HepG2 (cell line): ENCODE measurements at regions of chr4 and their contacts with region 1.

Region 1: DNA sequence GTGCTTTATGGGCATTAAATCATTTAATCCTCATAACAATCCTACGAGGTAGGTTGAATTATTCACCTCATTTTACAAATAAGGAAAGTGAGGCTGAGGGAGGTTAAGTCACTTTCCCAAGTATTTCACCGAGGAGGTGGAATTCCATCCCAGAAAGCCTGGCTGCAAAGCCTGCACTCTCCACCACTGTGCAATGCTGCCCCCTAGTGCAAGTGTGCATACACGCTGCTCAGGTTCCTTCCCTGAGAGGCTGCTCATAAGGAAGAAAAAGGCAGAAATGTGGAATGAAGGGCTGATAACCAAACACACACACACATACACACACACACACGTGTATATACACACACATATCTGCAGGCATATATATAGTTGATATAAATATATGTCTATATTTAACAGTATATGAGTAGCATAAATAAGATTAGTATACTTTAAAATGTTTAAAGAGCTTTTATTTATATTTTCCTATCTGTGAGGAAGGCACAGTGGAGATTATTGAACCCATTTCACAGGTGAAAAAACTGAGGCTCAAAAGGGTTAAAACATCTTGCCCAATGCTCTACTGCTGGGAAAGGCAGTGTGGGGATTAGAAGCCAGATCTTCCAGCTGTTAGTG is 714.5 kb upstream of the TENM3 start:
- DNase-seq: peak; percentile 56
- ATAC-seq: peak; percentile 97
- H3K4me3 ChIP-seq: no peak overlapping the region
- H3K27ac ChIP-seq: no peak overlapping the region
- H3K4me1 ChIP-seq: no peaks in the 10 kb centered on the region
- H3K27me3 ChIP-seq: 0 out of 5 replicates have a peak, but pooled peaks cover 1 to 2% of the 10 kb centered on the region in 2 experiments
- CTCF ChIP-seq: peak; percentile 92
- EP300 ChIP-seq: no peak
- POLR2A ChIP-seq: no peak
- RAD21 ChIP-seq: peak; percentile 83

Region 2: GRCh38 chr4:181105487-181105886 is 423.2 kb before region 1 on chr4:
- CTCF ChIA-PET with region 1: no interaction called
- POLR2A ChIA-PET with region 1: no interaction called
- in situ Hi-C with region 1: no loop called
- intact Hi-C with region 1: no loop called
- DNase-seq: no peak
- ATAC-seq: no peak
- H3K4me3 ChIP-seq: no peak overlapping the region
- H3K27ac ChIP-seq: no peak overlapping the region
- H3K4me1 ChIP-seq: no peaks in the 10 kb centered on the region
- H3K27me3 ChIP-seq: no peaks in the 10 kb centered on the region
- CTCF ChIP-seq: no peak
- EP300 ChIP-seq: no peak
- POLR2A ChIP-seq: no peak
- RAD21 ChIP-seq: no peak

Region 3: DNA sequence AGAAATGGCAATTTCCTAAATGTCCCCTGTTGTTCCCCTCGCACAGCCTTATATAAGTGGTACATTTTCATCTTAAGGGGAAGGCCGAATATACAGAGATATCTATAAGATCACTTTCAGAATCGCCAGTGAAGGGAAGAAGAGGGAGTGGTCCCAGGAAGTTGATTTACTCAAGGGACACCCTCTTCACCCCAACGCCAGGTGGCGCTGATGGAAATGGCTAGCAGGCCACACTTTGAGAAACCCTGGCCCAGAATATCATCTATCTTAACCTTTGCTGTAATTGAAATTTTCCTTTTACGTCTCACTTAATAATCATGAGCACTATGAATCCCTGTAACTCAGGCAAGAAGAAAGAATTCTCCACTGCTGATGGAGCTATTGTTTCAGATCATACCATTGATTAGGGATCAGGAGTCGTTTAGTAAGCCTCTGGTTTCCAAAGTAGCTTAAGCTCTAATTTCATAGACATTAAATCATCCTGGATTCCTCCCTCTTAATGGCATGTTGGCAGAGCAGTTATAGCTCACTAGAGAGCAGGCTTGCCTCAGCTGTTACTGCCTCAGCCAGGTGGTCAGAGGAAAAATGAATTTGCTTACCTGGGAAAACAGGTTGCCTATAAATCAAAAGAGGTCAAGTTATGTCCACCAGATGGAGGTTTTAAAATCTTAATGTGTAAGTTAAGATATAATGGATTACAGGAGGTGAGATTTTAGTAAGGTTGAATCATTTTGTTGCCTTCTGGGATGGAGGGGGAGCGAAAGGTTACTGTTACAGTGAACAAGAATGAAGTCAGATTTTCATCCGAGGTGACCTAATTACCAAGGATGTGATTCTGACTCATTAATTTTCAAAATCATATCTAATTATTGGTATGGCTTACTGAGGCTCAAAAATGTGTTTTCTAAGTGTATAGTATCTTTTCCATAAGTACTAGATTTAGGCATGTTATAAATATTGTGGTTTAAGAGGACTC is 226.7 kb before region 1 on chr4:
- CTCF ChIA-PET with region 1: interaction called, 32 read pairs
- POLR2A ChIA-PET with region 1: no interaction called
- in situ Hi-C with region 1: loop called (anchors 10 kb)
- intact Hi-C with region 1: loop called (anchors 1 kb)
- DNase-seq: peak; percentile 32
- ATAC-seq: peak; percentile 89
- H3K4me3 ChIP-seq: no peak overlapping the region
- H3K27ac ChIP-seq: no peak overlapping the region
- H3K4me1 ChIP-seq: no peaks in the 10 kb centered on the region
- H3K27me3 ChIP-seq: no peaks in the 10 kb centered on the region
- CTCF ChIP-seq: peak; percentile 66
- EP300 ChIP-seq: no peak
- POLR2A ChIP-seq: no peak
- RAD21 ChIP-seq: 0 out of 2 replicates have a peak, but pooled peaks have one; percentile 18

Region 4: GRCh38 chr4:181443021-181443420 is 85.7 kb before region 1 on chr4:
- CTCF ChIA-PET with region 1: no interaction called
- POLR2A ChIA-PET with region 1: no interaction called
- in situ Hi-C with region 1: no loop called
- intact Hi-C with region 1: no loop called
- DNase-seq: no peak
- ATAC-seq: no peak
- H3K4me3 ChIP-seq: no peak overlapping the region
- H3K27ac ChIP-seq: no peak overlapping the region
- H3K4me1 ChIP-seq: no peaks in the 10 kb centered on the region
- H3K27me3 ChIP-seq: no peaks in the 10 kb centered on the region
- CTCF ChIP-seq: no peak
- EP300 ChIP-seq: no peak
- POLR2A ChIP-seq: no peak
- RAD21 ChIP-seq: no peak

Region 5: DNA sequence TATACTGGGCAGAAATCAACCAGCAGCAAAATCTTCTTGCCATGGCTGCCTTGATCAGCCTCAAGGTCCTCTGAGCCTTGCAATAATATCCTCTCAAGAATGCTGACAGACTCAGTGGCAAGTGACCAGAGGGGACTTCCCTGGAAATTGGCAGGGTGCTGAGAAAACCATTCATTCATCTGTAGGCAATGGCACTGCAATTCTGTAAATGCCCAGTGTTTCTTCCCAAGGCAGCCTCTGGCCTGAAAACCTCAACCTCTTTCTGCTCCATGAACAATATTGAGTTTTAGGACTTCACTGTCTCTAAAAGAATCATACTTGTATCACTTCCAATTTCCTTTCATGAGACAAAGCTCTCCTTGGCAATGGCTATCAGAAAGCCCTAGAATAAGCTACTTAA is 39.8 kb before region 1 on chr4:
- CTCF ChIA-PET with region 1: no interaction called
- POLR2A ChIA-PET with region 1: no interaction called
- in situ Hi-C with region 1: no loop called
- intact Hi-C with region 1: no loop called
- DNase-seq: no peak
- ATAC-seq: no peak
- H3K4me3 ChIP-seq: no peak overlapping the region
- H3K27ac ChIP-seq: no peak overlapping the region
- H3K4me1 ChIP-seq: no peaks in the 10 kb centered on the region
- H3K27me3 ChIP-seq: no peaks in the 10 kb centered on the region; a peak in 1 of 5 replicates
- CTCF ChIP-seq: no peak
- EP300 ChIP-seq: no peak
- POLR2A ChIP-seq: no peak
- RAD21 ChIP-seq: no peak